ENCODE measurements at regions of chr9 and their contacts with region 1.

Region 1: DNA sequence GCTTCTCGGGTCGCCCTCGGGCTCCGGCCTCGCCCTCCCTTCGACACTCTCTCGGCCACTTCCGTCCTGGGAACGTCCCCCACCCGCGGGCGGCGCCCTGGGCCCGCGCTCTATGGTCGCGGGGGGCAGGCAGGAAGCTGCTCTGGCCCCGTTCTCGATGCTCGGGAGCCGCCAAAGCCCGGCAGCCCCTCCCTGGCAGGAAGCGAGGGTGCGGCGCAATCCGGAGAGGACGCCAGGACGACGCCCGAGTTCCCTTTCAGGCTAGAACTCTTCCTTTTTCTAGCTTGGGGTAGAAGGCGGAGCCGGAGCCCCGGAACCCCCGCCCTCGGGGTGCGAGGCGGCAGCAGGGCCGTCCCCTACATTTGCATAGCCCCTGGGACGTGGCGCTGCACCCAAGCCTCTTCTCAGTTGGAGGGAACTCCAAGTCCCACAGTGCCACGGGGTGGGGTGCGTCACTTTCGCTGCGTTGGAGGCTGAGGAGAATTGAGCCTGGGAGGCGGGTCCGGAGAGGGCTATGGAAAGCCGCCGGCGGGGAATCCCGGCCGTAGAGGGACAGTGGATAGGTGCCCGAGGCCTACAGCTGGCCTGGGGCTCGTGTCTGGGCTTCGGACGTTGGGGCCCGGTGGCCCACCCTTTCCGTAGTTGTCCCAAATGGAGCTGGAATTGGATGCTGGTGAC is at the starts of genes CREB3 and TLN1:
- DNase-seq: peak; percentile 96
- H3K4me3 ChIP-seq: peak within 1 kb of the TSS; percentile 83
- H3K27me3 ChIP-seq: no peaks in the 10 kb centered on the region
- CTCF ChIP-seq: no peak
- polyA plus RNA-seq, gene CREB3: 67.9 and 75.8 TPM in 2 replicates
- polyA plus RNA-seq, gene TLN1: 215 and 399 TPM in 2 replicates

Region 2: DNA sequence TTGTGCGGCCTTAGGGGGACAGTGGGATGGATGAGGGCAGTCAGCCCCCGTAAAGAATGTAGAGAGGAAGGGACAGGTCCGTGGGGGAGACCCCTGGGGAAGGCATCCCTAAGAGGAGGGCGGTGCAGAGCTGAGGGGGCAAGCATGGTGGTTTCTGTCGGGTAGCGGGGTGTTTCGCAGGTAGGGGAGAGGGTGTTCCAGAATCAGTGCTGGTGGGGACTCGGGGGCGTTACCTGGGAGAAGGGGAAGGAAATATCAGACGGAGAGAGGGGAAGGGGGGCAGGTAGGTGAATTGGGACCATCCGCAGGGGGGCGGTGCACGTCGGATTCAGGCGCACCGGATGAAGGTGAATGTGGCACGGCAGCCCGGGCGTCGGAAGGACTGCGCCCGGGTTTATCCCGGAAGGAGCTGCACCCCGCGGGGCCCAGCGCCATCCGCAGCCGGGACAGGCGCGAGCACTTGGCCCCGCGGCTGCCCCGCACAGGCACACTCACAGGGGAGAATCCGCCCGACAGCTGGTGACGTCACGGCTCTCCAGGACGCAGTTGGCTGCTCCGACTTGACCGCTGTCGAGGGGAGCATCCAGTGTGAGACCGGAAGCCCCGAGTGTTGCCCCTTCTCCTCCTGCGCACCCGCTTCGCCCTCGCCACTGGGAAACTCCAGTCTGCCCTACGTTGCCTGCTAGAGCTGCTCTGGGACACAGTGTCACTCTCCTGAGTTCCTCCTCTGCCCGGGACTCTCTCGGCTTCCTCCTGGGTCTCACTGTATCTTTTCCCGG is 115.4 kb before region 1 on chr9:
- CTCF ChIA-PET with region 1: no interaction called
- POLR2A ChIA-PET with region 1: interaction called, 24 read pairs
- DNase-seq: no peak
- H3K4me3 ChIP-seq: peak overlapping the region; percentile 29
- H3K27me3 ChIP-seq: peaks cover 12% of the 10 kb centered on the region
- CTCF ChIP-seq: no peak

Region 3: DNA sequence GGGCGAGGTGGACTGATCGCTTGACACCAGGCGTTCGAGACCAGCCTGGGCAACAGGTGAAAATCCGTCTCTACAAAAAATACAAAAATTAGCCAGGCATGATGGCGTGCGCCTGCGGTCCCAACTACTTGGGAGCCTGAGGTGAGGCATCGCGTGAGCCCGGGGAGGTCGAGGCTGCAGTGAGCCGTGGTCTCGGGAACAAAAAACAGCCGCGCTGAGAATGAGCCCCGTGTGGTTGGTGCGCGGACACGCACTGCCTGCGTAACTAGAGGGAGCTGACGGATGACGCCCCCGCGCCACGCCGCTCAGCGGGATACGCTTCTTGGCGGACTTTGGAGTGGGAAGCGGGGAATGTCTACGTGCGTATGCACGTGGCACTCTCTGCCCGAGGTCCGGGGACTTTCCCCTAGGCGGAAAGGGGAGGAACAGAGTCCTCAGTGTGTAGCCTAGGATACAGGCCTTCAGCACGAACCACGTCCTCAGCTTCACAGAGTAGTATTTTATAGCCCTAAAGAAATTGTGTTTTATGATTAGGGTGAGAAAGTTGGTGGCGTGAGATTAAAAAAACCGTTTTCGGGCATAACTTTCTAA is 74.6 kb before region 1 on chr9 and contains the start of gene RMRP:
- CTCF ChIA-PET with region 1: interaction called, 74 read pairs
- POLR2A ChIA-PET with region 1: interaction called, 7 read pairs
- DNase-seq: peak; percentile 98
- H3K4me3 ChIP-seq: peak within 1 kb of the TSS; percentile 69
- H3K27me3 ChIP-seq: no peaks in the 10 kb centered on the region
- CTCF ChIP-seq: peak; percentile 36; the same call in 1 of the 2 replicates
- polyA plus RNA-seq, gene RMRP: 235 and 1,738 TPM in 2 replicates

Region 4: GRCh38 chr9:35696525-35697215 is 35.6 kb before region 1 on chr9:
- CTCF ChIA-PET with region 1: interaction called, 116 read pairs
- POLR2A ChIA-PET with region 1: interaction called, 35 read pairs
- DNase-seq: no peak
- H3K4me3 ChIP-seq: no peak overlapping the region
- H3K27me3 ChIP-seq: no peaks in the 10 kb centered on the region
- CTCF ChIP-seq: peak; percentile 87

Region 5: DNA sequence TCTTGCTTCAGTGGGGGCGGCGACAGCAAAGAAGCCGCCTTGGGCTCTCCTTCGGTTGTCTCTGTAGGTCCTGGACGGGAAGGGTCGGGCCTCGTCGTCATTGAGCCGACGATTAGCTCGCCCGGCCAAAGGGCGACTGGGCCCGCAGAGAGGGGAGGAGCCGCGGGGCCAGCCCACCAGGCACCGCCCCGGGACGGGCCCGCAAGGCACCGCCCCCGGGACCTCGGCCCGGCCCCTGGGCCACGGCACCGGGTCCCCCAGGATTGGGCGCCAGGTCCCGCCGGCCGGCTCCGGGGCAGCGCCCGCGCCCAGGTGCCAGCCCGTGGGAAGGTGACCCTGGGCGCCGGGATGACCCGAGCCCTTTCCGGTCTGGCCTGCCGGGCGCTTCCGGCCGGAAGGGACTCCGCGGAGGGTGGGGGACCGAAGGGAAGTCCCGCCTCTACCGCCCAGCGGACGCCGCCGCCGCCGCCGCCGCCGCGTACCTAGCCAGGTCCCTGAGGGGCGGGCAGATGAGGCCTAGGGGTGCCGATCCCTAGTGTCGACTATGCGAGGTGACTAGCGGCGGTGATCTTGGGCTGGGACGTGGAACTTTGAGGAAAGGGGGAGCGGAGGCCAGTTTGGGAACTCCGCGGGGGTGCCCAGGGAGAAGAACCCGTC is 16.7 kb after region 1 on chr9 and contains the starts of genes GBA2 and RGP1:
- CTCF ChIA-PET with region 1: interaction called, 78 read pairs
- POLR2A ChIA-PET with region 1: interaction called, 11 read pairs
- DNase-seq: no peak
- H3K4me3 ChIP-seq: peak within 1 kb of the TSS; percentile 65
- H3K27me3 ChIP-seq: no peaks in the 10 kb centered on the region
- CTCF ChIP-seq: no peak
- polyA plus RNA-seq, gene GBA2: 30.3 and 44.1 TPM in 2 replicates
- polyA plus RNA-seq, gene RGP1: 17.4 and 19.7 TPM in 2 replicates